ENCODE measurements at regions of chr4 and their contacts with region 1.

Region 1: DNA sequence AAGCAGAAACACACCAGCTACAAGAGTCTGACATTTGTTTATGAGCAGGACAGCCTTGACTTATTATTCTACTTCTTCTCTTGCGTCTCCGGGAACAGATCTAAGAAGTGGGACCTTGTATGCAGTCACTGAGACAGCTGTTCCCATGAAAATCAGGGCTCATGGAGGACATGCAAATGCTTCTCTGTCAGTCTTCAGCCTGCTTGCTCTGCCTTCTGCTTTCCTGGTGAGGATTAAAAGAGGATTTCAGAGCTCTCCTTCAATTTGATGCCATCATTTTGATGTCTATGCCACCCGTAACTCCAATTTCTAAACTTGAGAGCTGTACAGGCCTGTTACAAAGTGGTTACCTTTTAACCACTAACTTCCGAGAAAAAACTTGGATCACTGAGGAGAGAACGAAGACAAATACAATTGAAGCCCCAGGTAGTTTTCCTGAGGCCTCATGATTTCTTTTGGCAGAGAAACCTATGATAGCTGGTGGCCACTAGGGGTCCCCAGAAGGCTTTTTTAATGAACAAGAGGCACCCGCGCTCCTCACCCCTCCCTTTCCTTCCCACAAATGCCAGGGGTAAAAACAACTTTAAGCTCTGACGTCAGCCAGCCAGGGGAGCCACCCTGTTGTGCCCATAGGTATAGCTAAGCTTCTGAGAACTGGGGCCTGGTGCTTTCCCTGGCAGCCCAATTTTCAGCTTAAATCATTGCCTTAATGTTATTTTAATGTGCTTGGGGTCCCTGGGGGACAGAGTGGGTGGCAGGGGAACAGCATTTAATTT is 97.0 kb downstream of the DDIT4L start:
- DNase-seq: peak; percentile 94
- H3K4me3 Mint-ChIP-seq: peak overlapping the region; percentile 43
- H3K27ac Mint-ChIP-seq: peak overlapping the region; percentile 91
- H3K4me1 Mint-ChIP-seq: peaks cover 42% of the 10 kb centered on the region
- H3K27me3 Mint-ChIP-seq: no peaks in the 10 kb centered on the region

Region 2: DNA sequence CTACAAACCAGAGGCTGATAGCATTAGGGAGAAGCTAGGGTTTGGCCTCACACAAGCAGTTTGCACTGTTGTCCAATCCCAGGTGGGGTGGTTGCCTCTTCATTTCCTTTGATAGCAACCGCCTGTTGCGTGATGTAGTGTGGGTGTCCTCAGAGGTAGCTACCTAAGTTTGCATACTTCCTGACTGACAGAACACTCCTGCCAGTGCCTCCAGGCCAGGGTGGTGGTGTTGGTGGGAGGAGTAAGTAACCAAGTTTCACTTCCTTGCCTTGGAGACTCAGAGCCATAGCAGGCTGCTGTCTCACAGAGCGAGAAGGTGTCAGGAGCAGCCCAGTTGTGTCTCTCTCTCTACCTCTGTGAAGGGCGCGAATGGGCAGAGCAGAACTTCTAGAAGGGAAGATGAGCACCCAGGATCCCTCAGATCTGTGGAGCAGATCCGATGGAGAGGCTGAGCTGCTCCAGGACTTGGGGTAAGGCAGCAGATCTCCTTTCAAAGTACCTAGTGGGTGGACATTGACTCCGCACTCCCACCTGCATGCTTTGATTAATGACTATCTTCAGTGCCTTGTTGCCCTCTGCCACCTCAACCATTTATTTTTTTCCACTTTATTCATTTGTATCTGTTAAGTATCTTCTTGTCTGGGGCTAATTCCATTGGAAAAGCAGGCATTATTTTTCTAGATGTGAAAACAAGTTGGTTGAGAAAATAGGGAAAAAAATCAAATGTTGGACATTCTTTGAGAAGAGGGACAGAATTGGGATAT is 276.6 kb before region 1 on chr4 and contains the start of gene DAPP1:
- intact Hi-C with region 1: loop called (anchors 5 kb)
- DNase-seq: peak; percentile 95
- H3K4me3 Mint-ChIP-seq: peak within 1 kb of the TSS; percentile 95
- H3K27ac Mint-ChIP-seq: peak within 1 kb of the TSS; percentile 97
- H3K4me1 Mint-ChIP-seq: peaks cover 70% of the 10 kb centered on the region
- H3K27me3 Mint-ChIP-seq: no peaks in the 10 kb centered on the region
- total RNA-seq, gene DAPP1: 28.4 and 29.5 TPM in 2 replicates

Region 3: GRCh38 chr4:100049872-100050271 is 43.4 kb before region 1 on chr4:
- intact Hi-C with region 1: no loop called
- DNase-seq: no peak
- H3K4me3 Mint-ChIP-seq: no peak overlapping the region
- H3K27ac Mint-ChIP-seq: no peak overlapping the region
- H3K4me1 Mint-ChIP-seq: no peaks in the 10 kb centered on the region
- H3K27me3 Mint-ChIP-seq: peaks cover under 1% of the 10 kb centered on the region

Region 4: DNA sequence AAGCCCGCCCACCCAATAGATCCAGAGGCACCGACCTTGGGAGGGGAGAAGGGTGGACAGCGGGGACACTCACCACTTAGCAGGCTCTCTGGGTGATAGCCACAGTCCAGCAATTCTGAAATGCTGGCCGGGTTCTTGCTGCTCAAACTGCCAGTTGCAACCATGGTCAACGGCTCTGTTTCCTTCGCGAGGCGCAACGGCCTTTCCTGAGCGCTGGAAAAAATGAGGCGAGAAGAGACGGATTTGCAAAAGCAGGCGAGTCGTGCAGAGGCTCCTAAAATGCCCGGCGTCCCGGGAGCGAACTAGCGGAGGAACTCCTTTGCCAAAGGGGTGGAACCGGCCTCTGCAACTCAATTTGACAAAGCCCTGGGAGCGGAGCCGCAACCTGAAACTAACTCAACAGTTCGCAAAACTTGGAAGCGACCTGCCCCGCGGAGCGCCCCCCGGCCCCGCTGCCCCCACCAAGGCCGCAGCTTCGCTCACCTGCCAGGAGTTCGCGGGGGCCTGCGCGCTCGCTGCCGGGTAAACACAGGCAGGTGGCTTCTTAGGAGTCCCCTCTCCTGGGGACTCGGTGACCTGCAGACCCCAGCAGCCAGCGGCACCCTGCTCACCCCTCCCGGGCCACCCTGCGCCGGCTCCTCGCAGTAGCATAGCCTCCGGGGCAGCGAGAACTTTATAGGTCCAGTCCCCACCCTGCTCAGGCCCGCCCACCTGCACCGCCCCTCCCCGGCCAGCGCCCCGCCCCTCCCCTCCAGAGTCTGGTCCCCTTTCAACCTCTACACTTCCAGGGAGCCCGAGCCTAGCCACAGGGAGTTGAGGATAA is 96.8 kb after region 1 on chr4 and contains the start of gene DDIT4L:
- intact Hi-C with region 1: loop called (anchors 10 kb)
- DNase-seq: peak; percentile 67
- H3K4me3 Mint-ChIP-seq: peak within 1 kb of the TSS; percentile 76
- H3K27ac Mint-ChIP-seq: no peak within 1 kb of the TSS
- H3K4me1 Mint-ChIP-seq: peaks cover 17% of the 10 kb centered on the region
- H3K27me3 Mint-ChIP-seq: peaks cover 45% of the 10 kb centered on the region
- total RNA-seq, gene DDIT4L: 0.56 and 0.76 TPM in 2 replicates

Region 5: DNA sequence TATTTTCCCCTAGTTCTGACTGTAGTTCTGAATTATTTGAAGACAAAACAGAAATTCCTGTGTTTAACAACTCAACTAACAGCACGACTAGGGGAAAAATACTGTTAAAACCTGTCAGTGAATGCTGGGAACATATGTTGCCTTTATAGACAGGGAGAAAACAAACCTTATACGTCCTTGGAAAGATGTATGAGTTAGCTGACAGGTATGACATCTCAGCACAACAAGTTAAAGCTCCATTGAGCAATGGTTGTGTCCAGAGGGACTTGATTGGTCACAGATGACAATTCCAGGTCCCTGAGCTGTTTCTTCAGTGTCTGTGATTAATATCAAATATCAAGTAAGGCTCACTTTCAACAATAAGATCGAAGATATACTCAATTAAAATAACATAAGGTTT is 155.2 kb after region 1 on chr4:
- intact Hi-C with region 1: no loop called
- DNase-seq: no peak
- H3K4me3 Mint-ChIP-seq: no peak overlapping the region
- H3K27ac Mint-ChIP-seq: no peak overlapping the region
- H3K4me1 Mint-ChIP-seq: no peaks in the 10 kb centered on the region
- H3K27me3 Mint-ChIP-seq: no peaks in the 10 kb centered on the region

Region 6: GRCh38 chr4:101020956-101021355 is 927.7 kb after region 1 on chr4:
- intact Hi-C with region 1: loop called (anchors 5 kb)
- DNase-seq: peak; percentile 77
- H3K4me3 Mint-ChIP-seq: peak overlapping the region; percentile 66
- H3K27ac Mint-ChIP-seq: peak overlapping the region; percentile 82
- H3K4me1 Mint-ChIP-seq: peaks cover 42% of the 10 kb centered on the region
- H3K27me3 Mint-ChIP-seq: no peaks in the 10 kb centered on the region

Region 7: DNA sequence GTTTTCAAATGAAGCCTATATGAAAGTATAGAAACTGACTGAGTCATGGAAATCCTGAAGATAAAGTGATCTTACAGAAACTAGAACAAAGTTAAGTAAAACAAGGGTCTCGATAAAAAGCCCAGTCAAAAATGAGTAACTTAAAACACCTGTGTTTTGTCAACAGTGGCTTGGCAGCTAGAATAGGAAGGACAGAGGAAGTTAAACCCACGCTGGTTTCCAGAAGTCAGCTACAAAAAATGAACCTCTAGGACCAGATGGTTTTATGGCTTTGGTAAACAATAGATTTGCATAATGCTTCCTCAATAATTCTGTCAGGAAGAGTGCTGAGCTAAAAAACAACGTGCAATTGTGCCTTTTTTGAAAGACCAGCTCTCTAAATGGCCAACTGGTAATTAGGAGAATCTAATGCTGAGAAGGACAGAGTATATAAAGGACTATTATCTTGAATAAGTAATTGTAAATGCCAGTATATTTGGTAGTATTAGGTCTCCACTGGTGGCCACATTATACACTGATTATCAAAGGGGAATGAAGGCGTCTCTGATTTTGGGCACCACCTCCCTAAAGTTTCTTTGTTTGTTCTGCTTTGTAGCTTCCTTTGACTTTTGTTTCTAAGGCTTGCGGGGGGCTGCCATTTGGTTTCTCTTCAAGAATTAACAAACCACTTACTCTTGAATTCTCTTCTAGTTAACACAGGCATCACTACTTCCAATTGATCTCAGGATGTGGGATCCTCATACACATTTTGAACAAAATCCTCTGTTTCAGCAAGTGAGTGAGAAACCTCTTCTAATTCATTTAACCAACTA is 1326.3 kb after region 1 on chr4:
- intact Hi-C with region 1: loop called (anchors 5 kb)
- DNase-seq: peak; percentile 63
- H3K4me3 Mint-ChIP-seq: peak overlapping the region; percentile 71
- H3K27ac Mint-ChIP-seq: peak overlapping the region; percentile 55
- H3K4me1 Mint-ChIP-seq: peaks cover 44% of the 10 kb centered on the region
- H3K27me3 Mint-ChIP-seq: peaks cover 26% of the 10 kb centered on the region

Region 8: GRCh38 chr4:101730291-101731117 is 1637.2 kb after region 1 on chr4:
- intact Hi-C with region 1: loop called (anchors 5 kb)
- DNase-seq: peak; percentile 82
- H3K4me3 Mint-ChIP-seq: no peak overlapping the region
- H3K27ac Mint-ChIP-seq: no peak overlapping the region
- H3K4me1 Mint-ChIP-seq: peaks cover 5% of the 10 kb centered on the region
- H3K27me3 Mint-ChIP-seq: peaks cover 11% of the 10 kb centered on the region